A549 (cell line): ENCODE measurements at regions of chr15 and their contacts with region 1.

Region 1: DNA sequence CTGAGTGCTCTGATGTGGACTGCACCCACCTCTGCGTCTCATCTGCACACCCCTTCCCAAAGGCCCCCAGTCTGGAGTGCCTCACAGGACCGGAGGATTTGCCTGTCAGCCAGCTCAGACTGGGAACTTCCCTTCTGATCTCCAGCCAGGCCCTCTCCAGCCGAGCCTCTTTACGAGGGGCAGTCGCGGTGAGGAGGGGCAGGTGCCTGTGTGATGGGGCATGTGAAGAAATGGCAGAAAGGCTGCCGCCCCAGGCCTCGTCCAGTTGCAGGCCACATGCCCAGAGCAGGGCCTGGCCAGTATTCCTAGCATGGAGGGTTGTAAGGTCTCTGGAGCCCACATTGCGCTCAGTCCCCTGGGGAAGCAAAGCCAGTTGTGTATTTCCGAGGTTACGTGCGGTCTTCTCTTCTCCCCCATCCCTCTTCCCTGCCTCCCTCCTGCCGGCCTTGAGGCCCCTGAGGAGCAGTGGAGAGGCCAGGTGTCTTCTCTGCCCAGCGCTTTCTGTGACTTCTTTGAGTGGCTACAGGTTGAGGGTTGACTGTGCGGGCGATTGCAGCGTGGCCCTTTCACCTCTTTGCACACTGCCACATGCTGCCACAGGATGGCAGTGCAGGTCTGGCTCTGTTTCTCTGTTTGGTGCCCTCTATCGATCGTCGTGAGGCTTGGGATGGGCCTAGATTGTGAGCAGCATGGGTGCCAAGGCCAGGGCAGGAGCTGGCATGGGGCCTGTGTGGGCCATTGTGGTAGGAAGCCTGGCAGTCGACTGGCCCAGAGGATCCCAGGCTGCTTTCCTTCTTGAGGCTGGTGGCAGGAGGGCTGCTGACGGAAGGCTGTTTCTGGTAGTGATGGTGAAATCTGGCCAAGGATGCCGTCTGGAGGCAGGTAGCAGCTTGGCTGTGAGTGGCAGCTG is 5.3 kb downstream of the CLK3 start:
- DNase-seq: peak; percentile 80
- ATAC-seq: peak; percentile 81 to 91
- H3K4me3 ChIP-seq: no peak overlapping the region
- H3K27ac ChIP-seq: no peak overlapping the region
- H3K4me1 ChIP-seq: peaks cover 16% of the 10 kb centered on the region; the same call in 1 of the 3 replicates
- CTCF ChIP-seq: peak; percentile 87
- EP300 ChIP-seq: no peak
- POLR2A ChIP-seq: no peak
- RAD21 ChIP-seq: peak; percentile 42 to 60

Region 2: GRCh38 chr15:74610302-74610951 is 10.5 kb before region 1 on chr15:
- CTCF ChIA-PET with region 1: interaction called, 17 read pairs
- POLR2A ChIA-PET with region 1: no interaction called
- DNase-seq: no peak
- ATAC-seq: no peak
- H3K4me3 ChIP-seq: no peak overlapping the region
- H3K27ac ChIP-seq: no peak overlapping the region
- H3K4me1 ChIP-seq: no peaks in the 10 kb centered on the region
- CTCF ChIP-seq: no peak
- EP300 ChIP-seq: no peak
- POLR2A ChIP-seq: no peak
- RAD21 ChIP-seq: no peak